ENCODE measurements at regions of chr4 and their contacts with region 1.

Region 1: GRCh38 chr4:154506253-154506652 is 14.7 kb upstream of the DCHS2 start:
- DNase-seq: peak; percentile 33
- H3K4me3 ChIP-seq: no peak overlapping the region
- H3K27ac ChIP-seq: peak overlapping the region; percentile 49
- H3K4me1 ChIP-seq: peaks cover 16% of the 10 kb centered on the region
- H3K27me3 ChIP-seq: no peaks in the 10 kb centered on the region
- CTCF ChIP-seq: peak; percentile 41 to 60

Region 2: GRCh38 chr4:154329268-154329868 is 176.9 kb before region 1 on chr4:
- CTCF ChIA-PET with region 1: no interaction called
- dilution Hi-C with region 1: no loop called
- in situ Hi-C with region 1: no loop called
- intact Hi-C with region 1: loop called (anchors 2 kb)
- DNase-seq: peak; percentile 21
- H3K4me3 ChIP-seq: no peak overlapping the region
- H3K27ac ChIP-seq: no peak overlapping the region
- H3K4me1 ChIP-seq: no peaks in the 10 kb centered on the region
- H3K27me3 ChIP-seq: no peaks in the 10 kb centered on the region
- CTCF ChIP-seq: peak; percentile 36 to 45

Region 3: DNA sequence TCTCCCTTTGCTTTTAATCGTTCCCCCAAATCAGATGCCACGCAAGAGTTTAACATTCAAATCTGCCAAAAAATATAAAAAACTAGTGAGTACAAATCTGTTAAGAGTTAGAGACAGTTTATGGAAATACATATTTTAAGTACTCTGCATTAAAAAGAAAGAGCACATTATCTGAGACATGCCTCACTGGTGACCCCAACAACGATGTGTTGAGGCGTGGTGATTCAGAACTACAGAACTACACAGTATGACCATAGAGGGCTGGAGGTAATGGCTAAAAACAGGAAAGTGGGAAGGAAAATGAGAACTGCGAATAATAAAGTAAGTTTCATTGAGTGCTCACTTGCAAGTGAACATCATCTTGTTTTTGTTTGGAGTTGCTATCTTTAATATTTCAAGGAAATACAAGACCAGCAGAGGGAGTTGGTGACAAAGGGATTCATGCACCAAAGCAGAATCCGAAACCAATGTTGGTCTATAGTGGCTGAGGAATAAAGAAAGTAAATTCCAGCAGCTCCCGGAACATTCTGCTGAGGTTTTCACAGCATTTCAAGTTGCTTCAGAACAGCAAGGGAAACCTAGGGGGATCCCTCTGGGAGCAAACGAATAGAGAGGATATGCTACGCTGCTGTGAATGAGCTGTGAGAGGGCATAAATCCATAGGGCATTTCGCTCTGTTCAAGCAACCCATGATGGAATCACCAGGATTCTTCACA is 106.8 kb before region 1 on chr4:
- CTCF ChIA-PET with region 1: no interaction called
- dilution Hi-C with region 1: no loop called
- in situ Hi-C with region 1: loop called in 1 of 2 experiments (anchors 10 kb)
- intact Hi-C with region 1: loop called (anchors 1 kb)
- DNase-seq: peak; percentile 19
- H3K4me3 ChIP-seq: peak overlapping the region in 1 of 3 experiments; percentile 12
- H3K27ac ChIP-seq: no peak overlapping the region
- H3K4me1 ChIP-seq: no peaks in the 10 kb centered on the region
- H3K27me3 ChIP-seq: no peaks in the 10 kb centered on the region
- CTCF ChIP-seq: peak; percentile 26 to 56

Region 4: DNA sequence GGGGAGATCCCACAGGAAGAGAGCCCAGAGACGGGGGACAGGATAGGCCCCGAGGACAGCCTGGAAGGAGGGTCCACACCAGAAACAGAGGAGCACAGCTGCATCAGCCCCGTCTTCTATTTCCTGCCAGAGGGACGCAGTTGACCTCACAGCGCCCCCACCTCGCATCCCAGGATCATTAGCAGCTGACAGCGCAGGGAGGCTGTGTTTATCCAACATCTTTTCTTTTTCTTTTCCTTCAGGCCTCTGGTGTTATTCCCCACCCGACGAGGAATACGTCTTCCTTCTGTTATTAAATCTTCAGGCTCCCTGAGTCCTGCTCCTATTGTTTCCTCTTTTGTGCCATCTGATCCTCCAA is 90.1 kb before region 1 on chr4:
- CTCF ChIA-PET with region 1: interaction called, 6 read pairs
- dilution Hi-C with region 1: no loop called
- in situ Hi-C with region 1: loop called in 1 of 2 experiments (anchors 10 kb)
- intact Hi-C with region 1: loop called (anchors 1 kb)
- DNase-seq: no peak
- H3K4me3 ChIP-seq: peak overlapping the region; percentile 46 to 56 (median 48)
- H3K27ac ChIP-seq: no peak overlapping the region
- H3K4me1 ChIP-seq: peaks cover 8% of the 10 kb centered on the region
- H3K27me3 ChIP-seq: no peaks in the 10 kb centered on the region
- CTCF ChIP-seq: peak in 1 of 2 donors; percentile 29

Region 5: GRCh38 chr4:154618708-154619315 is 112.6 kb after region 1 on chr4:
- CTCF ChIA-PET with region 1: no interaction called
- dilution Hi-C with region 1: no loop called
- in situ Hi-C with region 1: no loop called
- intact Hi-C with region 1: loop called (anchors 1 kb)
- DNase-seq: peak; percentile 41
- H3K4me3 ChIP-seq: no peak overlapping the region
- H3K27ac ChIP-seq: no peak overlapping the region
- H3K4me1 ChIP-seq: no peaks in the 10 kb centered on the region
- H3K27me3 ChIP-seq: no peaks in the 10 kb centered on the region
- CTCF ChIP-seq: peak; percentile 76 to 78

Region 6: GRCh38 chr4:155106629-155107028 is 600.4 kb after region 1 on chr4:
- CTCF ChIA-PET with region 1: no interaction called
- dilution Hi-C with region 1: no loop called
- in situ Hi-C with region 1: no loop called
- intact Hi-C with region 1: no loop called
- DNase-seq: no peak
- H3K4me3 ChIP-seq: no peak overlapping the region
- H3K27ac ChIP-seq: no peak overlapping the region
- H3K4me1 ChIP-seq: no peaks in the 10 kb centered on the region
- H3K27me3 ChIP-seq: no peaks in the 10 kb centered on the region
- CTCF ChIP-seq: no peak

Measured in mammary epithelial cell (primary cell).